ENCODE measurements at regions of chr9 and their contacts with region 1.

Region 1: DNA sequence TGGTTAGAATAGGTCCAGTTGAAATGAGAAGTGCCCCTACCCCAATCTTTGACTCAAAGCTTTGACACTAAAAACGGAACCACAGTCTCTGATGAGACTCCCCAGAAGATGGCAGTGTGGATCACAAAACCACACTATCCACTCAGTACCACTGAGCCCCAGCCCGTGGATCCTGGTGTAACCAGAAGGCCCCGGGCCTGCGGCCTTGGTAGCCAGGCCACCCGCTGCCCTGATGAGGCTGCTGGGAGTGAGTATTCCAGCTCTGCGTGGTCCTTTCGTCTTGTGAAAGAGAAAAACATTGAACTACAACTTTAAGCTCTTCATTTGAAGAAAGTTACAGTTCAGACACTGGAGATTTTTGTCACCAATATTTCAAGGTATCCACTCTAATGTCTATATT is 42.2 kb upstream of the FBP1 start:
- DNase-seq: peak; percentile 68 to 81
- ATAC-seq: peak; percentile 94 to 99 (median 96)
- H3K4me3 ChIP-seq: no peak overlapping the region
- H3K27ac ChIP-seq: peak overlapping the region in 4 of 10 donors; percentile 6 to 48 (median 30)
- H3K4me1 ChIP-seq: peaks cover 0 to 9% (median 5%) of the 10 kb centered on the region in 9 donors
- H3K27me3 ChIP-seq: no peaks in the 10 kb centered on the region
- CTCF ChIP-seq: peak; percentile 50 to 85 (median 78)

Region 2: GRCh38 chr9:94772639-94773303 is 91.3 kb after region 1 on chr9:
- intact Hi-C with region 1: loop called in 5 of 10 experiments (anchors 5 to 10 kb)
- DNase-seq: no peak
- ATAC-seq: no peak
- H3K4me3 ChIP-seq: no peak overlapping the region
- H3K27ac ChIP-seq: no peak overlapping the region
- H3K4me1 ChIP-seq: peaks cover 0 to 3% (median 0%) of the 10 kb centered on the region in 9 donors
- H3K27me3 ChIP-seq: no peaks in the 10 kb centered on the region
- CTCF ChIP-seq: no peak

Region 3: GRCh38 chr9:94993064-94993833 is 311.7 kb after region 1 on chr9:
- intact Hi-C with region 1: loop called in 1 of 10 experiments (anchors 10 kb)
- DNase-seq: no peak
- ATAC-seq: no peak
- H3K4me3 ChIP-seq: no peak overlapping the region
- H3K27ac ChIP-seq: peak overlapping the region in 5 of 10 donors; percentile 1 to 36 (median 14)
- H3K4me1 ChIP-seq: peaks cover 10 to 41% (median 24%) of the 10 kb centered on the region in 9 donors
- H3K27me3 ChIP-seq: no peaks in the 10 kb centered on the region
- CTCF ChIP-seq: no peak

Region 4: GRCh38 chr9:95127249-95128176 is 446.0 kb after region 1 on chr9:
- intact Hi-C with region 1: loop called (anchors 1 to 5 kb)
- DNase-seq: peak; percentile 86 to 87
- ATAC-seq: peak; percentile 83 to 94 (median 90)
- H3K4me3 ChIP-seq: peak overlapping the region in 9 of 10 donors; percentile 21 to 53 (median 43)
- H3K27ac ChIP-seq: peak overlapping the region in 1 of 10 donors; percentile 36
- H3K4me1 ChIP-seq: peaks cover 0 to 11% (median 6%) of the 10 kb centered on the region in 9 donors
- H3K27me3 ChIP-seq: no peaks in the 10 kb centered on the region
- CTCF ChIP-seq: peak; percentile 92 to 100 (median 98)

Region 5: DNA sequence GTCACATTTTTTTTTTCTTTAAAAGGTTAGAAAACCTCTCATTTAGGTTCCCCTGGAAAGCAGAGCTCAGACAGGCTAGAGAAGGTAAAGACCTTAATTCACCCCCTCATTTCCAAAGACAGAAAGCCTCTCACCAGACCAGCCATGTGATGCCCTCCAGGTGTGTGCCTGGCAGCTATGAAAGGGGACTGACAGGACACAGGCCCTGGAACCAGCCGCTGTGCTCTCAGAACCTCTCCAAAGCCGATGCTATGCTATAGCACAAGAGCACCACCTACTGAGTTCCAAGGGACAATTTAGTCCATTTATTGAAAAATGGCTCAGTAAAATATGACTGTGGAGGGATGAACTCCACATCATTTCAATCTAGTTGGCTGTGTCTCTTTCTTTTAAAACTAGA is 587.2 kb after region 1 on chr9:
- intact Hi-C with region 1: loop called in 2 of 10 experiments (anchors 10 kb)
- DNase-seq: peak in 1 of 2 donors; percentile 22
- ATAC-seq: peak in 6 of 8 donors; percentile 61 to 76 (median 72)
- H3K4me3 ChIP-seq: no peak overlapping the region
- H3K27ac ChIP-seq: no peak overlapping the region
- H3K4me1 ChIP-seq: no peaks in the 10 kb centered on the region
- H3K27me3 ChIP-seq: no peaks in the 10 kb centered on the region
- CTCF ChIP-seq: peak in 7 of 9 donors; percentile 29 to 63 (median 49)